OCI-LY7 (cell line): ENCODE measurements at regions of chr1 and their contacts with region 1.

Region 1: DNA sequence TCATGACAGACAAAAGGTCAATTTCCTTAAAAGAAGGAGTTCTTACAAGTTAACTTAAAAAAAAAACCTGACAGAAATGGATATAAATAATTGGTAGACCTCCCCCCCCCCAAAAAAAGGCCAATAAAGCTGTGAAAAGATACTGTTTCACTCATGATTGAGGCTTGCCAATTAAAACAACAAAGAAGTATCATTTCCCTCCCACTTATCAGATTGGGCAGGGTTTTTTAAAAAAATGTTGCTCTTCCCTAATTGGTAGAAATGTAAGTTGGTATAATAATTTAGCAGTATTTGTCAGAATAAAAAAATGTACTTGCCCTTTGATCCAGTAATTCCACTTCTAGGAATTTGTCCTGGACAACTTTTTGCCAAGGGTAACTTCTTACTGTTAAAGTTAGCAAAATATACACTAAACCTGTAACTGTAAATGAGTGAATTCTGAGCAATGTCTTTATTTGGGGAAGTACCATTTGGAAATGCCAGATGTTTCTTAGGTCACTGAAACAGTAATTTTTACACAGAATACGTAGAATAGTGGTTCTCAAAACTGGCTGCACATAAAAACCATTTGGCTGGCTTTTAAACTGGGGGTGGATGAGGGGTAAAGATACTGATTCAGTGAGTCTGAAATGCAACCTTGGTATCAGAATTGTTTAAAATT is 17.5 kb downstream of the RNF2 start:
- DNase-seq: no peak
- H3K4me3 ChIP-seq: no peak overlapping the region
- H3K27ac ChIP-seq: no peak overlapping the region
- H3K4me1 ChIP-seq: peaks cover 5% of the 10 kb centered on the region
- CTCF ChIP-seq: no peak

Region 2: DNA sequence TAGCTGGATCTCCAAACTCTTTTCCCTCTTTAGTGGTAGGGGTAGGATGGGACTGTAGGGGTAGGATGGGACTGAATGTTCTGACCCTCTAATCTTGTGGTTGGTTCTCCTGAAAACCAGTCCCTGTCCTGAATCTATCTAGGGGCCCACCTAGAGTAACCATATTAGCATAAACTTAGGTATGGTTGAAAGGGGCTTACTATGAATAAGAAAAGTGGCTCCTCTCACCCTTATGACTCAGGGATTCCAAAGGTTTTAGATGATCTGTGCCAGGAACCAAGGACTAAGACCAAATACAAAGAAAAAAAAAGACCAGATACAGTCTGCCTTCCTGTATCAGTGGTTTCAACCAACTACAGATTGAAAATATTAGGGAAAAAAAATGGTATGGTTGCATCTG is 11.5 kb after region 1 on chr1:
- CTCF ChIA-PET with region 1: no interaction called
- POLR2A ChIA-PET with region 1: interaction called, 12 read pairs
- intact Hi-C with region 1: no loop called
- DNase-seq: no peak
- H3K4me3 ChIP-seq: no peak overlapping the region
- H3K27ac ChIP-seq: no peak overlapping the region
- H3K4me1 ChIP-seq: no peaks in the 10 kb centered on the region
- CTCF ChIP-seq: no peak